ENCODE measurements at regions of chr6 and their contacts with region 1.

Region 1: DNA sequence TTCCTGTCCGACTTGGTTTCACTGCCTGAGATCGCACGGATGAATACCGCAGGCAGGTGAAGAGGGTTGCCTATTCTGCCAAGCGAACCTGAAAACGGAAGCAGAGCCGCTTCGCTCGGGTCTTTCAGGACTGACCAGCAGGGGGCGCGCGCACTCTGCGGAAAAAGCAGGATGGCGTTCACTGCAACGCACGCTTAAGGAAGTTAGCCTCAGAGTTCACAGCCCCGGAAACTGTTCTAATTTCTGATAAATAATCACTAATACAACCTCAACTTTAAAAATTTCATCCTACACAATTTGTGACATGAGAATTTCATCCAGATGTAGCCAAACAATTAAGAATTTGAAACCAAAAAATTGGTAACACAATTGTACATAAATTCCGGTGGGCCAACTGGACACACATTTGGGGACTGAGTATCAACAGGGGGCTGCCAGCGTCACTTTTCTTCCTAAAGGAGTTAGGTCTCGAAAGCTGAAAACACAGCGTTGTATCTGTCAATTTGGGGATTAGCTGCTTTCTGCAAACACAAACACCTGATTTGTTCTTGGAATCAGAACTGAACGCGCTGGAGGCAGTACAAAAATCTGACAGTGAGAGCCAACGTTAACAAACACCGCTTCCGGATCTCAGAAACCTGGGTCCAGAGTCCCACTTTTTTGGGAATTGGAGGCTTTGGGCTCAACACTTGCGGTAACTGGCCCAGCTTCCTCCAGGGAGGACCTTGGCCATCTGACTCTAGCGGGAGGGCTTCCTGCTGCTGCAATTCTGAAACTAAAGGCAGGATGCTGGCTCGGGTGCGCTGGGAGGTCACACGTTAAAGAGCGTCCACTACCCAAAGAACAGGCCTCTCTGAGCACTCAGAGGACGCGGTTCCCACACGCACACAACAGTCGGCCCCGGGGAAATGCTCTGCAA is 8.8 kb downstream of the PXDC1 start:
- DNase-seq: peak; percentile 94
- ATAC-seq: peak; percentile 96
- H3K4me3 Mint-ChIP-seq: no peak overlapping the region
- H3K27ac Mint-ChIP-seq: peak overlapping the region; percentile 14
- H3K4me1 Mint-ChIP-seq: peaks cover 3% of the 10 kb centered on the region
- H3K27me3 Mint-ChIP-seq: peaks cover 10% of the 10 kb centered on the region

Region 2: DNA sequence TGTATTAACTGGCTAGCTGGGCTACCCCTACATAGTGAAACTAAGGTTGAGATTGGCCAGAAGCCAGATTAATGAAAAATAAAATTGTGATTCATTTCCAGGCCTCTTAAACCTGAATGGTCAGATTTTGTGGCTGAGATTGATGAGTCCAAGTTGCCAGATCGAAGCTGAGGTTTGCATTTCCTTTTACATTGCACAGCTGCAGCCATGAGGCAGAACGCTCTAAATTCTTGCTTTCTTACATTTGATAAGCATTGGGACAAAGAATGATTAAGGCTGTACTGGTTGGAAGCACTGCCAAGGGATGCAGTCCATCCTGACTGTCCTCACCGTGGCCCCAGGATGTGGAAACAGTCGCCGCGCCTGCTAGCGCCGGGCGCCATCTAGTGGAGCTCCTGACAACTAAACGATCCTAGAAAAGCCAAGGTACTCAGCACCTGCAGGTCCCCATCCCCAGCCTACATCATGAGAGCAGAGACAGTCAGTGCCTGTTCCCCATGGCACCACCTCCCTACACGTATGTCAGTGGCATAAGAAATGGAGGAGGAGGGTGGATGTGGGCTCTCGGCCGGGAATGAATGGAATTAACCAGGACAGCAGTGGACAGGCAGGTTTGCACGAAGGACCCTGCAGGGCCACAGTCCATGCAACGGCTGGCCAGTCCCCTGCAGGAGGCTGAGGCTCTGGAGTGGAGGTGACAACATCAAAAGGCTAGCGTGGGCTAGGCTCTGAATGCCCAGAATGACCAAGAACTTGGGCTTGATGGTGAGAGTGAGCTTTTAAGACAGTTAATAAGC is 10.1 kb before region 1 on chr6:
- CTCF ChIA-PET with region 1: interaction called, 14 read pairs
- POLR2A ChIA-PET with region 1: no interaction called
- intact Hi-C with region 1: no loop called
- DNase-seq: peak; percentile 80
- ATAC-seq: peak; percentile 83
- H3K4me3 Mint-ChIP-seq: no peak overlapping the region
- H3K27ac Mint-ChIP-seq: no peak overlapping the region
- H3K4me1 Mint-ChIP-seq: no peaks in the 10 kb centered on the region
- H3K27me3 Mint-ChIP-seq: peaks cover 12% of the 10 kb centered on the region

Region 3: GRCh38 chr6:3929281-3929798 is 186.7 kb after region 1 on chr6:
- CTCF ChIA-PET with region 1: interaction called, 25 read pairs
- POLR2A ChIA-PET with region 1: no interaction called
- intact Hi-C with region 1: loop called (anchors 1 kb)
- DNase-seq: no peak
- ATAC-seq: no peak
- H3K4me3 Mint-ChIP-seq: no peak overlapping the region
- H3K27ac Mint-ChIP-seq: no peak overlapping the region
- H3K4me1 Mint-ChIP-seq: no peaks in the 10 kb centered on the region
- H3K27me3 Mint-ChIP-seq: peaks cover 3% of the 10 kb centered on the region

Region 4: DNA sequence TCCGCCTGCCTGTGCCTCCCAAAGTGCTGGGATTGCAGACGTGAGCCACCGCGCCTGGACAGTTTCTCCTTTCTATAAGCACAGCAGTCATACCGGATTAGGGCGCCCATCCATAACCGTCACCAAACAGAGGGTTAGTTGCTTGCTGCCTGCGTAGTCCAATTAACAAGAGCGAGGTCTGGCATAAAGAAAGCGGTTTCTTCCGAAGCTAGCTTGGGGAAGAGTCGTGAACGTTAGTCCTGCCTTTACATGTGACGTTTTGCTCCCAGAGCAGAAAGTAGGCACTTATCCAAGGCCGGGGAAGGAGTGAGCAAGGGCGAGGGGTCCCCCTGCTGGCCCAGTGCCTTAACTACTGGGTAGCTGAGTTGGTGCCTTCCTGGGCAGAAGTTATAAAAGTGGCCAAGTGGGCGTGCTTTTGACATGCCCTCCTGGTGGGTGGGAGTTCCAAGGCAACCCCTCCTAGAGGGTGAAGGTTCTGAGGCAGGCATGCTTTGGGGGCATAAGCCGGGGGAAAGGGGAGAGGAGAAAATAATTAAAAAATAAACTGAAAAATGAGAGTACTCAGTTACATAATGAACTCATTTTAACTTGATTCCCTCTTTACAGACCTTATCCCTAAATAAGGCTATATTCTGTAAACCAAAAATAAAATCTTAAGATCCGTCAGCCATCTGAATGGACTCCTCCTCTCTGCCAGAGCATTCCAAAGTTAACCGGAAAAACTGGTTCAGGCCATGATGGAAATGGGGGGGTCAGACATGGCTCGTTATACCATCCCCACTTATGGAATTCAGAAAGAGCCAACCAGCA is 248.2 kb after region 1 on chr6:
- CTCF ChIA-PET with region 1: interaction called, 12 read pairs
- POLR2A ChIA-PET with region 1: no interaction called
- intact Hi-C with region 1: loop called (anchors 1 kb)
- DNase-seq: peak; percentile 86
- ATAC-seq: peak; percentile 100
- H3K4me3 Mint-ChIP-seq: no peak overlapping the region
- H3K27ac Mint-ChIP-seq: peak overlapping the region; percentile 7
- H3K4me1 Mint-ChIP-seq: peaks cover 10% of the 10 kb centered on the region
- H3K27me3 Mint-ChIP-seq: no peaks in the 10 kb centered on the region

Region 5: DNA sequence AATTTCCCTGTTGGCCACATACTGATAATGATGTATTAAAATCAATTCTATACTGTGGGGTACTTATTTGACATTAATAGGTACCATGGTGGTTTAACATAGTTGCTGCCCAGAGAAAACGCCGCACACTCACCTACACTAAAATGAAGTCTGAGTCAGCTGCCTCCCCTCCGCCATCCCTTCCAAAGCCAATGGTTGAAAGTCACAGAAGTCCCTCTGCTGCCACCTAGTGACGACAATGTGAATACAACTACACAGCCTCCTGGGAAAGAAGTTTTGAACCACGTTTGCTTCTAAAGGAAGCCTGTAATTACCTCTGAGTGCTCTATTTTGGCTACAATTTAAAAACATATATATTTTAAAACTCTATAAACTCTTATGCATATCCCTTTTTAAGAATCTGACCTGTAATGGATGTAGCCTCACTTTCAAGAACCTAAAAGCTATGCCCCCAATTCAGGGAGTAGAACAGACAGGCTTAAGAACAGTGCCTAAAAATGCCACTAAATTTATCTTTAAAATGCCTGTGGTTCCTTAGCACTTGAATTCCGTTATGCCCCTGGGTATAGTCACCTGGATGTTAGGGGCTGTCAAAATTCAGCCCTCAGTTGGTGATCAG is 413.3 kb after region 1 on chr6:
- CTCF ChIA-PET with region 1: no interaction called
- POLR2A ChIA-PET with region 1: no interaction called
- intact Hi-C with region 1: loop called (anchors 1 kb)
- DNase-seq: peak; percentile 88
- ATAC-seq: peak; percentile 99
- H3K4me3 Mint-ChIP-seq: no peak overlapping the region
- H3K27ac Mint-ChIP-seq: no peak overlapping the region
- H3K4me1 Mint-ChIP-seq: peaks cover 7% of the 10 kb centered on the region
- H3K27me3 Mint-ChIP-seq: no peaks in the 10 kb centered on the region

Measured in activated CD4-positive, alpha-beta T cell treated with anti-CD3 and anti-CD28 coated beads for 36 hours (primary cell).